ENCODE measurements at regions of chr12 and their contacts with region 1.

Region 1: DNA sequence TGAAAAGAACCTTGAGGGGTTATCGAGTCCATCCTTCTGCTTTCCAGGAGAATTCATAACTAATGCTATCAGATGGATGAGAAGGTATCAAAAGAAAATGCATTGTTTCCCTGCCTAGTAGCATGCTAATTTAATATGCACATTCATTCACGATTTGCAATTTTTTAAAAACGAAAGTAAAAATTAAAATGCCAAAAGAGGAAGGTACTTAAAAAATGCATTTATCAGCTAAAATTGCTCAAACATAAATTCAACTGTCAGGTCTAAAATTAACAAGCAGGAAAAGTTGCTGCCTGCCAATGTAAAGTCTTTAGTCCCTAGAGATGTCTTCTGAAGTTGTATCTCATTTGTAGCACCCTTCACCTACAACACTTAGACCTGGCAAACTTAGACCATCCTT is 7.9 kb downstream of the ATF7 start:
- DNase-seq: no peak
- H3K4me3 ChIP-seq: peak overlapping the region; percentile 1 to 35 (median 16)
- H3K27ac ChIP-seq: peak overlapping the region in 4 of 5 donors; percentile 3 to 71 (median 48)
- H3K4me1 ChIP-seq: peaks cover 30 to 90% (median 55%) of the 10 kb centered on the region in 4 donors
- H3K27me3 ChIP-seq: no peaks in the 10 kb centered on the region
- CTCF ChIP-seq: no peak
- EP300 ChIP-seq: no peak
- POLR2A ChIP-seq: no peak

Region 2: DNA sequence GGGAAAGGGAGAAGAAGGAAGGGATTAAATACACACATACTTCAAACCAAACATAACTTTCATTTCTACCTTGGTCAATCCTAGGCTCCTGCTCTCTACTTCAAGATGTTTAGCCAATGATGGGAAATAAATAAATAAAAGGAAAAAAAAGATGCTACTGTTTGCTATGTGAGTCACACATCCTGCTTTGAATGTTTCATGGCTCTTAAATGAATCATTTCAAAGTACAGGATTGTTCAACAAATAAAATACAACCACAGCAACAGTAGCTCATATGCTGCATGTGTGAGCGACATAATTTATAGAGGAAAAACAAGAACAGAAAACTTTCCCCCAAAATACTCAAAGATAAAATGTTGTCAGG is 56.7 kb before region 1 on chr12:
- intact Hi-C with region 1: loop called (anchors 10 kb)
- DNase-seq: peak in 1 of 2 donors; percentile 27
- H3K4me3 ChIP-seq: no peak overlapping the region
- H3K27ac ChIP-seq: peak overlapping the region in 3 of 5 donors; percentile 13 to 49 (median 48)
- H3K4me1 ChIP-seq: peaks cover 7 to 68% (median 41%) of the 10 kb centered on the region in 4 donors
- H3K27me3 ChIP-seq: no peaks in the 10 kb centered on the region
- CTCF ChIP-seq: no peak
- EP300 ChIP-seq: no peak
- POLR2A ChIP-seq: no peak

Measured in stomach (tissue), 19 donors.